Endothelial cell of umbilical vein (primary cell): ENCODE measurements at regions of chr10 and their contacts with region 1.

Region 1: GRCh38 chr10:63465293-63466143 is at the start of gene JMJD1C:
- DNase-seq: peak; percentile 80
- H3K4me3 ChIP-seq: peak within 1 kb of the TSS; percentile 55 to 98 (median 83)
- H3K27ac ChIP-seq: peak within 1 kb of the TSS; percentile 82
- H3K4me1 ChIP-seq: peaks cover 5% of the 10 kb centered on the region
- H3K27me3 ChIP-seq: no peaks in the 10 kb centered on the region
- CTCF ChIP-seq: peak in 1 of 2 donors; percentile 12
- POLR2A ChIP-seq: peak; percentile 84
- total RNA-seq, gene JMJD1C: 93.3 and 97.1 TPM in 2 replicates

Region 2: GRCh38 chr10:63206997-63207811 is 258.3 kb before region 1 on chr10:
- CTCF ChIA-PET with region 1: no interaction called
- POLR2A ChIA-PET with region 1: no interaction called
- dilution Hi-C with region 1: no loop called
- intact Hi-C with region 1: loop called (anchors 5 kb)
- DNase-seq: peak; percentile 96
- H3K4me3 ChIP-seq: no peak overlapping the region
- H3K27ac ChIP-seq: peak overlapping the region; percentile 87
- H3K4me1 ChIP-seq: peaks cover 54% of the 10 kb centered on the region
- H3K27me3 ChIP-seq: no peaks in the 10 kb centered on the region
- CTCF ChIP-seq: no peak
- POLR2A ChIP-seq: no peak

Region 3: GRCh38 chr10:63430097-63430998 is 35.2 kb before region 1 on chr10:
- CTCF ChIA-PET with region 1: no interaction called
- POLR2A ChIA-PET with region 1: no interaction called
- dilution Hi-C with region 1: no loop called
- intact Hi-C with region 1: loop called (anchors 2 kb)
- DNase-seq: peak; percentile 83
- H3K4me3 ChIP-seq: no peak overlapping the region
- H3K27ac ChIP-seq: peak overlapping the region; percentile 92
- H3K4me1 ChIP-seq: peaks cover 55% of the 10 kb centered on the region
- H3K27me3 ChIP-seq: no peaks in the 10 kb centered on the region
- CTCF ChIP-seq: no peak
- POLR2A ChIP-seq: no peak

Region 4: DNA sequence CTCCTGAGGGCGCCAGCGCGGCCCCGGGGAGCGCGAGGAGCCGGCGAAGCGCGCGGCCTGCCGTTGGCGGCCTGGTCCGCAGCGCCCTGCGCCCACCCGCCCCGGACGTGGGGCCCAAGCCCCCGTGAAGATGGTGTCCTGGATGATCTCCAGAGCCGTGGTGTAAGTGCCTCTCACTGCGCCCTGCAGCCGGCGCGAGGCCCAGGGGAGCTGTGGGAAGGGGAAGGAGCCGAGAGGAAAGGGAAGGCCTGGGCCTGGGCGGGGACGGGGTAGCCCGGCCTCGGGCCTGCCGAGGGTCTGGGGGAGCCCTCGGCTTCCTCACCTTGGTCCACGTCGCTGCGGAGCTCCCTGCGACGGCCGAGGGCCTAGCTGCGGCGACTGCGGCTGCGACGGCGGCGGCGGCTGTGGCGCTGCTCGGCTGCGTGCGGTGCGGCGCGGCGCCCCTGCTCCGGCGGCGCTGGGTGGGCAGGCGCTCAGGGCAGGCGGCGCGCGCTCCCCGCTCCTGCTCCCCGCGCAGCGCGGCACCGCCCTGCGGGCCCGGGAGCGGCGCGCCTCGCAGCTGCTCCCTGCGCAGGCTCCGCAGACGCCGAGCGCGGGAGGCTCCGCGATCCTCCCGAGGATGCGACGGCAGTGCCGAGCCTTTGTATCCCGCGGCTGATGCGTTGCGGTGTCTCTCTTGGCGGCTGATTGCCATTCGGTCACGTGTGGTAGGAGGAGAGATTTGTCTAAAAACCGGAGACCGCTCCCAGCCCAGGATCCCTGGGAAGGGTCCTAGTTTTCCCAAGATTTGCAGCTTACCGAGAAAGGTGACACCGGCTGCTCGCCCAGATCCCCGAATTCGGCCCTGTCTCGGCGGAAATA is 56.1 kb after region 1 on chr10:
- CTCF ChIA-PET with region 1: no interaction called
- POLR2A ChIA-PET with region 1: interaction called, 3 read pairs
- dilution Hi-C with region 1: no loop called
- intact Hi-C with region 1: loop called (anchors 2 kb)
- DNase-seq: peak; percentile 80
- H3K4me3 ChIP-seq: peak overlapping the region; percentile 50 to 93 (median 62)
- H3K27ac ChIP-seq: peak overlapping the region; percentile 90
- H3K4me1 ChIP-seq: peaks cover 7% of the 10 kb centered on the region
- H3K27me3 ChIP-seq: no peaks in the 10 kb centered on the region
- CTCF ChIP-seq: no peak
- POLR2A ChIP-seq: peak; percentile 74

Region 5: DNA sequence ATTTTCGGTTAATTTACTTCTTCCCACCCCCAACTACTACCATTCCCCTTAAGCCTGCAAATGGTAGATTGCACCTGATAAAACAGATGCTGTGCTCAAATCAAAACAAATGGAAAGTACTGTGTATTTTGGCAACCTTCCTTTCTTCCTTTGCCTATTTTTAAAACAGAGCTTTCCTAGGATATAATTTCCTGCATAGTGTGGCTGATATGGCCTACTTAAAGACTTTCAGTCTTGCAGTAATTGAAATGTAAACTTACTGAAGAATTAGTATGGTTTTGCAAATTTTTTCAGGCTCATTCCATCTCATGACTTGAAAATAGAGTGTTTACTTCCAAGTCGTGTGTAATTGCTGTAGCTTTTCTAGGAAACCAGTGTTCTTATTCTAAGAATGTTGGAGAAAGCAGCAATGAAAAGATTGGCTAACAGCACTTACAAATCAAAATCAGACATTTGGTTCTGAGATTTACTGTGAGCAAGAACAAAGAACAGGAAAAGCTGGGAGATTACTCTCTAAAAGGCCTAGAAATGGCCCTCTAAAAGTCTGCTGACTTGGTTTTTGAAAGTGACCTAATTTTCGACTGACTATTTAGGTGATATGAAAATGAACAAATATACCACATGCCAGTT is 107.7 kb after region 1 on chr10:
- CTCF ChIA-PET with region 1: no interaction called
- POLR2A ChIA-PET with region 1: no interaction called
- dilution Hi-C with region 1: no loop called
- intact Hi-C with region 1: loop called (anchors 5 kb)
- DNase-seq: peak; percentile 95
- H3K4me3 ChIP-seq: peak overlapping the region in 1 of 3 experiments; percentile 16
- H3K27ac ChIP-seq: peak overlapping the region; percentile 68
- H3K4me1 ChIP-seq: peaks cover 33% of the 10 kb centered on the region
- H3K27me3 ChIP-seq: no peaks in the 10 kb centered on the region
- CTCF ChIP-seq: no peak
- POLR2A ChIP-seq: no peak

Region 6: GRCh38 chr10:63767138-63767801 is 301.8 kb after region 1 on chr10:
- CTCF ChIA-PET with region 1: no interaction called
- POLR2A ChIA-PET with region 1: no interaction called
- dilution Hi-C with region 1: no loop called
- intact Hi-C with region 1: loop called (anchors 5 kb)
- DNase-seq: peak; percentile 70
- H3K4me3 ChIP-seq: no peak overlapping the region
- H3K27ac ChIP-seq: no peak overlapping the region
- H3K4me1 ChIP-seq: no peaks in the 10 kb centered on the region
- H3K27me3 ChIP-seq: no peaks in the 10 kb centered on the region
- CTCF ChIP-seq: peak in 1 of 2 donors; percentile 33
- POLR2A ChIP-seq: no peak